ENCODE measurements at regions of chr9 and their contacts with region 1.

Region 1: DNA sequence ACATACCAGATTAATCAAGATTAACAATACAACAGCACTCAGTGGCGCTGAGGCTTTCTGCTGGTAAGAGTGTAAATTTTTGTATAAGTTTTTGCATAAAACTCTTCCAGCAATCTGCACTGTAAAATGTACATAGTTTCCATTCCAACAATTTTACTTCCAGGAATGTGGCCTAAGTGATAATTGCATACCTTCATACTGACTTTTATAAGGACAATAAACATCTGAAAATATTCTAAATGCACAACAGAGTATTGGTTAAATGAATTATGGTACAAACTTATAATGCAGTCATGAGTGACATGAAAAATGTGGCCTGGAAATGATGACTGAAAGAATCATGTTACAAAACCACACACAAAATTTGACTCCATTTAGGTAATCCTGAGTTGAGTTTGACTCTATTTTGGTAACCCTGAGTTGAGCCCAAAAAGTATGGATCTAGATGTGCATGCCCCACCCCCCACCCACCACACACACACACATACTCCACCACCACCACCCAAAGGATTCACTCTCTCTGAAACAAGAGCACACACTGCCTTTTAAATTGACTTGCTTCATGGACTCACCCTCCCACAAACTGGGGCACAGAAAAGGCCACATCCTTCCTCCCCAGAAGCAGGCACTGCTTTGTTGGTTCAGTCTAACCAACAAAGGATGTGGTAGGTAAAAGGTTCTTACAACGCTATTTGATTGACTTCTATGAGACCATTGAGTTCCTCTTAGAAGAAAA is 137.6 kb downstream of the SUSD1 start:
- DNase-seq: peak; percentile 29 to 88 (median 70)
- ATAC-seq: peak; percentile 96
- H3K4me3 ChIP-seq: no peak overlapping the region
- H3K4me3 Mint-ChIP-seq: peak overlapping the region; percentile 68
- H3K27ac ChIP-seq: peak overlapping the region in 1 of 2 experiments; percentile 4
- H3K27ac Mint-ChIP-seq: peak overlapping the region; percentile 87
- H3K4me1 ChIP-seq: peaks cover 30% of the 10 kb centered on the region
- H3K4me1 Mint-ChIP-seq: peaks cover 59% of the 10 kb centered on the region
- H3K27me3 ChIP-seq: no peaks in the 10 kb centered on the region
- H3K27me3 Mint-ChIP-seq: peaks cover 17% of the 10 kb centered on the region
- CTCF ChIP-seq: no peak

Region 2: DNA sequence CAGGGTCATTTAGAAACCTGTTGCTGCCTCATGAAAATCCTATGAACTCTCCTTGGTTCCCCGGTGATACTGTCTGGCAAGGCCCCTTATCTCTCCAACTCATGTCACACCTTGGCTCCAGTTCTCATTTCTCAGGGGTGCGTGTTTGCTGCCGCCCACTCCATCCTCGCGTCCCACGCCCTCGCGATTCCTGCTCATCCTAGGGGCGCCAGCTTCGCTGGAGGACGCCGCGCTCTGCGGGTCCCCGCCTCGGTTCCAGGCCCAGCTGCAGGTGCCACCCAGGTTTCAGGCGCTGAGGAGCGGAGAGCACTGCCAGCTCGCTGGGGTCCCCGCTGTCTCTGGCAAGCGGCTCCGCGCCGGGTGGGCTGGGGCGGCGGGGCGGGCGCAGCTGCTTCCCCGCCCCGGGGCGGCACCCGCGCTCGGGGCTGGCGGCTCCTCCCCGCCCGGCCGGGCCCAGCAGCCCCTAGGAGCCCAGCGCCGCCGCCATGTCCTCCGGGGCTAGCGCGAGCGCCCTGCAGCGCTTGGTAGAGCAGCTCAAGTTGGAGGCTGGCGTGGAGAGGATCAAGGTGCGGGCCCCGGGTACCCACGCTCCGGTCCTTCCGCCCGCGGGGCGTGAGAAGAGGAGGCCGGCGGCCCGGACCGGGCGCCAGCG is 376.2 kb before region 1 on chr9 and contains the start of gene GNG10:
- CTCF ChIA-PET with region 1: no interaction called
- POLR2A ChIA-PET with region 1: no interaction called
- intact Hi-C with region 1: loop called in 1 of 2 experiments (anchors 5 kb)
- DNase-seq: peak; percentile 48 to 82 (median 66)
- ATAC-seq: peak; percentile 95
- H3K4me3 ChIP-seq: peak within 1 kb of the TSS; percentile 70 to 95
- H3K4me3 Mint-ChIP-seq: peak within 1 kb of the TSS; percentile 95
- H3K27ac ChIP-seq: peak within 1 kb of the TSS; percentile 55 to 57
- H3K27ac Mint-ChIP-seq: peak within 1 kb of the TSS; percentile 92
- H3K4me1 ChIP-seq: peaks cover 24% of the 10 kb centered on the region
- H3K4me1 Mint-ChIP-seq: peaks cover 40% of the 10 kb centered on the region
- H3K27me3 ChIP-seq: no peaks in the 10 kb centered on the region
- H3K27me3 Mint-ChIP-seq: no peaks in the 10 kb centered on the region
- CTCF ChIP-seq: no peak
- total RNA-seq, gene GNG10: 1.6 to 2.6 TPM

Region 3: GRCh38 chr9:111992523-111992922 is 44.9 kb before region 1 on chr9:
- CTCF ChIA-PET with region 1: no interaction called
- POLR2A ChIA-PET with region 1: no interaction called
- intact Hi-C with region 1: loop called in 1 of 2 experiments (anchors 5 kb)
- DNase-seq: no peak
- ATAC-seq: peak; percentile 40
- H3K4me3 ChIP-seq: no peak overlapping the region
- H3K4me3 Mint-ChIP-seq: no peak overlapping the region
- H3K27ac ChIP-seq: no peak overlapping the region
- H3K27ac Mint-ChIP-seq: no peak overlapping the region
- H3K4me1 ChIP-seq: peaks cover 9% of the 10 kb centered on the region
- H3K4me1 Mint-ChIP-seq: peaks cover 21% of the 10 kb centered on the region
- H3K27me3 ChIP-seq: no peaks in the 10 kb centered on the region
- H3K27me3 Mint-ChIP-seq: no peaks in the 10 kb centered on the region
- CTCF ChIP-seq: no peak

Measured in CD8-positive, alpha-beta T cell (primary cell).